CD4-positive, alpha-beta memory T cell (primary cell): ENCODE measurements at regions of chr12 and their contacts with region 1.

Region 1: GRCh38 chr12:64222009-64222765 is at the start of gene KICS2:
- DNase-seq: peak; percentile 91 to 94 (median 94)
- H3K4me3 ChIP-seq: peak within 1 kb of the TSS; percentile 69 to 71
- H3K4me3 Mint-ChIP-seq: peak within 1 kb of the TSS; percentile 94 to 99 (median 97)
- H3K27ac ChIP-seq: peak within 1 kb of the TSS; percentile 89
- H3K27ac Mint-ChIP-seq: peak within 1 kb of the TSS; percentile 92 to 100 (median 99)
- H3K4me1 ChIP-seq: peaks cover 37% of the 10 kb centered on the region
- H3K4me1 Mint-ChIP-seq: peaks cover 21 to 49% (median 34%) of the 10 kb centered on the region in 4 donors
- H3K27me3 ChIP-seq: no peaks in the 10 kb centered on the region
- H3K27me3 Mint-ChIP-seq: peaks cover 0 to 7% of the 10 kb centered on the region in 2 donors
- total RNA-seq, gene KICS2: 21.2 to 24.1 TPM

Region 2: DNA sequence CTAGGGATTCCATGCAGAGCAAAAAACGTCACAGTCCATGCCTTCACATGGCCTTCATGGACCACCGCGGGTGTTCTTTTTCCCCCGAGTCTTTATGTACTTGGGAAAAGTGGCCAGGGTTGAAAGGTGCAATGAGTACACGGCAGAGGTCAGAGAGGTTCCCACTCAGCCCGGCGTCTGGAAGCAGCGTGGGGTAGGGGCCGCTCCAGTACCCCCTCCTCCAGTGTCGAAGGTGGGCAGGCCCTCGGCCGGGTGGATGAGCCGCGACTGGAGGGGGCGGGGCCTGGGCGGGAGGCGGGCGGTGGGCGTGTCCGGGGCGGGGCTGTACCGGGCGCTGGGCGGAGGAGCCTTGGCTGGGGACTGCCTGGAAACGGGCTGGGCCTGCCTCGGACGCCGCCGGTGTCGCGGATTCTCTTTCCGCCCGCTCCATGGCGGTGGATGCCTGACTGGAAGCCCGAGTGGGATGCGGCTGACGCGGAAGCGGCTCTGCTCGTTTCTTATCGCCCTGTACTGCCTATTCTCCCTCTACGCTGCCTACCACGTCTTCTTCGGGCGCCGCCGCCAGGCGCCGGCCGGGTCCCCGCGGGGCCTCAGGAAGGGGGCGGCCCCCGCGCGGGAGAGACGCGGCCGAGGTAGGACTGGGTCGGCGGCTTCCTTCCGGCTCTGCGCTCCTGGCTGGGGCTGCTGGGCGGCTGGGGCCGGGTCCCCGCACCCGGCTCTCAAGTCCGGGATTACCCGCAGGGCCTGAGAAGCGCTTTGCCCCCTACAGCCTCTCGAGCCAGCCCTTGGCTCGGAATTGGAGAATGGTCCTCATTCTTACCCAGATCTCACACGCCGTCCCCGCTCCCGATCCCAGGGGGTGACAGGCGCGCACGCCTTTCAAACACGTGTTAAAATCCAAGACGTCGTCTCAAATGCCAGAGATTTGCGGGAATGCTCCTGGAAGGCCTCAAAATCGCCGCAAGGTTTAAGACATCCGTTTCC is 442.4 kb before region 1 on chr12 and contains the start of gene RXYLT1:
- CTCF ChIA-PET with region 1: no interaction called
- POLR2A ChIA-PET with region 1: interaction called, 3 read pairs
- intact Hi-C with region 1: loop called (anchors 2 kb)
- DNase-seq: peak; percentile 74 to 86 (median 81)
- H3K4me3 ChIP-seq: peak within 1 kb of the TSS; percentile 38 to 96
- H3K4me3 Mint-ChIP-seq: peak within 1 kb of the TSS; percentile 93 to 99 (median 97)
- H3K27ac ChIP-seq: peak within 1 kb of the TSS; percentile 84
- H3K27ac Mint-ChIP-seq: peak within 1 kb of the TSS; percentile 91 to 98 (median 95)
- H3K4me1 ChIP-seq: peaks cover 19% of the 10 kb centered on the region
- H3K4me1 Mint-ChIP-seq: peaks cover 11 to 35% (median 16%) of the 10 kb centered on the region in 4 donors
- H3K27me3 ChIP-seq: no peaks in the 10 kb centered on the region
- H3K27me3 Mint-ChIP-seq: no peaks in the 10 kb centered on the region
- total RNA-seq, gene RXYLT1: 14.5 to 15.1 TPM

Region 3: GRCh38 chr12:63843721-63844390 is 378.3 kb before region 1 on chr12:
- CTCF ChIA-PET with region 1: interaction called, 5 read pairs
- POLR2A ChIA-PET with region 1: interaction called, 3 read pairs
- intact Hi-C with region 1: loop called (anchors 1 kb)
- DNase-seq: peak; percentile 61 to 76 (median 73)
- H3K4me3 ChIP-seq: peak overlapping the region; percentile 49 to 66
- H3K4me3 Mint-ChIP-seq: peak overlapping the region in 7 of 8 donors; percentile 35 to 81 (median 67)
- H3K27ac ChIP-seq: no peak overlapping the region
- H3K27ac Mint-ChIP-seq: no peak overlapping the region
- H3K4me1 ChIP-seq: peaks cover 15% of the 10 kb centered on the region
- H3K4me1 Mint-ChIP-seq: peaks cover 7 to 13% (median 10%) of the 10 kb centered on the region in 4 donors
- H3K27me3 ChIP-seq: no peaks in the 10 kb centered on the region
- H3K27me3 Mint-ChIP-seq: peaks cover 14 to 26% of the 10 kb centered on the region in 2 donors

Region 4: DNA sequence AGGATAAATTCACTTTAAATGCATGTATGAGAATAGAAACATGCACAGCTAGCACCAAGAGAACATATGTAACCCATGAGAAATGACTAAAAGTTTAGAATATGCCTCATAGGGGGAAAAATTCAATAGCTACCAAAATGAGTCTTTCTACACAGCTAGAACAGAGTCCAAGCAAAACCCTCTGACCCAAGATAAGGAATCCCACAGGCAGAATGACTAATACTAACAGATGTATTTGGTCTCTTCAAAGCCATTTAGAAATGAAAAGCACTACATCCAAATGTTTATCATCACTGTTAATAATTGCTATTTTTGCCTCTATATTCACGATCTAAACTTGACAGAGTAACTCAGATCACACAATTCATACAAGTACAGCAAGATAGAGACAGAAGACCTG is 44.1 kb before region 1 on chr12:
- CTCF ChIA-PET with region 1: no interaction called
- POLR2A ChIA-PET with region 1: no interaction called
- intact Hi-C with region 1: no loop called
- DNase-seq: no peak
- H3K4me3 ChIP-seq: no peak overlapping the region
- H3K4me3 Mint-ChIP-seq: no peak overlapping the region
- H3K27ac ChIP-seq: no peak overlapping the region
- H3K27ac Mint-ChIP-seq: no peak overlapping the region
- H3K4me1 ChIP-seq: no peaks in the 10 kb centered on the region
- H3K4me1 Mint-ChIP-seq: no peaks in the 10 kb centered on the region
- H3K27me3 ChIP-seq: no peaks in the 10 kb centered on the region
- H3K27me3 Mint-ChIP-seq: no peaks in the 10 kb centered on the region

Region 5: GRCh38 chr12:64403707-64404469 is 181.7 kb after region 1 on chr12 and contains the start of gene XPOT:
- CTCF ChIA-PET with region 1: no interaction called
- POLR2A ChIA-PET with region 1: interaction called, 15 read pairs
- intact Hi-C with region 1: loop called (anchors 1 kb)
- DNase-seq: peak; percentile 91 to 95 (median 94)
- H3K4me3 ChIP-seq: peak within 1 kb of the TSS; percentile 78 to 86
- H3K4me3 Mint-ChIP-seq: peak within 1 kb of the TSS; percentile 90 to 98 (median 96)
- H3K27ac ChIP-seq: peak within 1 kb of the TSS; percentile 91
- H3K27ac Mint-ChIP-seq: peak within 1 kb of the TSS; percentile 94 to 98 (median 97)
- H3K4me1 ChIP-seq: peaks cover 33% of the 10 kb centered on the region
- H3K4me1 Mint-ChIP-seq: peaks cover 21 to 49% (median 37%) of the 10 kb centered on the region in 4 donors
- H3K27me3 ChIP-seq: no peaks in the 10 kb centered on the region
- H3K27me3 Mint-ChIP-seq: no peaks in the 10 kb centered on the region
- total RNA-seq, gene XPOT: 88.8 TPM

Region 6: GRCh38 chr12:64451687-64452558 is 229.7 kb after region 1 on chr12 and contains the start of gene TBK1:
- CTCF ChIA-PET with region 1: no interaction called
- POLR2A ChIA-PET with region 1: interaction called, 3 read pairs
- intact Hi-C with region 1: loop called (anchors 5 kb)
- DNase-seq: peak; percentile 42 to 66 (median 50)
- H3K4me3 ChIP-seq: peak within 1 kb of the TSS; percentile 87 to 97
- H3K4me3 Mint-ChIP-seq: peak within 1 kb of the TSS; percentile 94 to 98 (median 96)
- H3K27ac ChIP-seq: peak within 1 kb of the TSS; percentile 92
- H3K27ac Mint-ChIP-seq: peak within 1 kb of the TSS; percentile 93 to 99 (median 97)
- H3K4me1 ChIP-seq: peaks cover 51% of the 10 kb centered on the region
- H3K4me1 Mint-ChIP-seq: peaks cover 33 to 59% (median 44%) of the 10 kb centered on the region in 4 donors
- H3K27me3 ChIP-seq: no peaks in the 10 kb centered on the region
- H3K27me3 Mint-ChIP-seq: no peaks in the 10 kb centered on the region
- total RNA-seq, gene TBK1: 23.8 to 25.0 TPM

Region 7: DNA sequence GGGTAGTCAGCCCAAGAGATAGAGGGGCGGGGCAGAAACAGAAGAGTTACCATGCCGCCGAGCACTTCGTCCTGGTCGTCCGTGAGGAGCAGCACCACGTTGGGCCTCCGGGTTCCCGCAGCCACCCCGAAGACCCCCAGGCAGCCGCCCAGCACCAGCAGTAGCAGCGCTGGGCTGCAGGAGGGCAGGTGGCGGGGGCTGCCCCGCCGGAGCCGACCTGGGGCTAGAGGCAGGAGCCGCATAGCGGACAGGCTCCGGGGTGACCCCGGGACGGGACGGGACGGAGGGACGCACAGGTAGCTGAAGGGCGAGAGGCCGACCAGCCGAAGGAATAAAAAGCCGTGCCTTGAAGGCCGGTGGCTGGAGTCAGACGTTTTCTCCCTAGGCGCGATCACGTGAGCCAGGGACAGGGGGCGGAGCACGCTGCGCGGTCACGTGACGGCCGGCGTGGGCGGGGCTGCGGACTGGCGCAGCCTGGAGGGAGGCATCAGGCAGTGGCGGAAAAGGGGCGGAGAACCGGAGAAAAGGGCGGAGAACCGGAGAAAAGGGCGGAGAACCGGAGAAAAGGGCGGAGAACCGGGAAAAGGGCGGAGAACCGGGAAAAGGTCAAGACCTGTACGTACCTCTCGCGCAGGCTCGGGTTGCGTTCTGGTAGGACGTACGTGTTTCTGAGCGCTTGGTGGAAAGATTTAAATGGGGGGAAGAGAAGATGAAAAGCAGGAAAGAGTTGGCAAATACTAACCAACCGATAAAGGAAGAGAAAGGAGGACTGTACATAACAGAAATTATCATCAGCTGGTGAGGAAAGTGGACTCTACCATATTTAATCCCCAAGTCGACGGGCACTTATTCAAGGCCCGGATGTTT is 537.1 kb after region 1 on chr12 and contains the start of gene GNS:
- CTCF ChIA-PET with region 1: no interaction called
- POLR2A ChIA-PET with region 1: no interaction called
- intact Hi-C with region 1: loop called (anchors 2 kb)
- DNase-seq: peak; percentile 86 to 94 (median 89)
- H3K4me3 ChIP-seq: peak within 1 kb of the TSS; percentile 45 to 86
- H3K4me3 Mint-ChIP-seq: peak within 1 kb of the TSS; percentile 89 to 99 (median 98)
- H3K27ac ChIP-seq: peak within 1 kb of the TSS; percentile 74
- H3K27ac Mint-ChIP-seq: peak within 1 kb of the TSS; percentile 93 to 98 (median 96)
- H3K4me1 ChIP-seq: peaks cover 35% of the 10 kb centered on the region
- H3K4me1 Mint-ChIP-seq: peaks cover 27 to 52% (median 40%) of the 10 kb centered on the region in 4 donors
- H3K27me3 ChIP-seq: no peaks in the 10 kb centered on the region
- H3K27me3 Mint-ChIP-seq: no peaks in the 10 kb centered on the region
- total RNA-seq, gene GNS: 34.2 to 35.0 TPM

Region 8: GRCh38 chr12:66144791-66145754 is 1922.9 kb after region 1 on chr12:
- CTCF ChIA-PET with region 1: no interaction called
- POLR2A ChIA-PET with region 1: no interaction called
- intact Hi-C with region 1: no loop called
- DNase-seq: no peak
- H3K4me3 ChIP-seq: no peak overlapping the region
- H3K4me3 Mint-ChIP-seq: no peak overlapping the region
- H3K27ac ChIP-seq: no peak overlapping the region
- H3K27ac Mint-ChIP-seq: peak overlapping the region in 6 of 7 donors; percentile 29 to 72 (median 37)
- H3K4me1 ChIP-seq: no peaks in the 10 kb centered on the region
- H3K4me1 Mint-ChIP-seq: peaks cover 4 to 14% (median 8%) of the 10 kb centered on the region in 4 donors
- H3K27me3 ChIP-seq: no peaks in the 10 kb centered on the region
- H3K27me3 Mint-ChIP-seq: no peaks in the 10 kb centered on the region